Left cardiac atrium (tissue), 4 donors: ENCODE measurements at regions of chr12 and their contacts with region 1.

Region 1: DNA sequence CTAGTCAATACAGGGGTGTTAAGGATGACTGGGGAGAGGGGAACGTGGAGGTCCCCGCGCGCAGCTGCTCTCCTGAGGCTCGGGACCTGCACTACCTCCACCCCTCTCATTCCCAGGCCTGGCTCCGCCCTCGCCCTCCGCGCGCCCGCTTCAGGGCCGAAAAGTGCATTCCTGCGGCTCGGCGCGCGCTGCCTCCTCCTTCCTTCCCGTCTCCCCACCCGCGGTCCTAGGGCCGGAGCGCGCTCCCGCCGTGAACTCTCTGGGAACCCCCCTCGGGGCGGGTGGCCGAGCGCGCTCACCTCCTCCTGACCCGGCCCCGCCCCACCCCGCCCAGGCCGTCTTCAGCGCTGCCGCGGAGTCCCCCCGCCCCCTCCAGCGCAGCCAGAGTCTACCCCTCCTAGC is 11.2 kb downstream of the RARG start:
- DNase-seq: peak; percentile 94
- ATAC-seq: peak; percentile 87 to 93

Region 2: DNA sequence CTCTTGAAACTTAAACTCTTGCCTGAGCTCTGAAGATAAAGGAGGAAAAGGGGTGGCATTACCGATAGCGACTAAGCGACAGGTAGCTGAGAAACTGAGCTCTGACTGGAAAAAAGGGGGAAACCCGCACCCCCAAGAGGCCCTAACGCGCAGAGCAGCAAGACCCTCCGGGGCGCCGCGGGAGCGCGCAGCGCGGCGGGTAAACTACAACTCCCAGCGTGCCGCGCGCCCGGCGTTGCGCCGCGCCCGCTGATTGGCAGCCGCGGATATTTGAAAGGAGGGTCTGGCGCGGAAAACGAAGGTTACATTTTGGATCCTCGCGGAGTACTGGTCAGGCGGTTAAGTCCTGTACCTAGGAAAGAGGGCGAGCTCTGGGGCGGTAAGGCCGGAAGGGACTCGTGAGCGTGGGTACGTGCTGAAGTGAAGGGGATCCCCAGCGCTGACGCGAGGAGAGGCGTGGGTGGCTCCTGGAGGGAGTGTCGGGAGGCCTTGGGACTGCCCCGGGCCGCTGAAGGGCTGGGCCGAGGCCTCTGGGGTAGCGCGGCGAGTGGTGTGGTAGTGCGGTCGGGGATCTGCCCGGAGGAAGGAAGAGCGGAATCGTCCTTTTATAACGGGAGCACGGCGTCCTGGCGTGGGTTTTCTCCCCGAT is 47.3 kb after region 1 on chr12 and contains the start of gene ESPL1:
- intact Hi-C with region 1: loop called in 1 of 2 experiments (anchors 5 kb)
- DNase-seq: peak; percentile 81
- ATAC-seq: peak; percentile 95 to 96
- total RNA-seq, gene ESPL1: 0.58 to 1.3 TPM